SK-N-SH (cell line): ENCODE measurements at regions of chr13 and their contacts with region 1.

Region 1: DNA sequence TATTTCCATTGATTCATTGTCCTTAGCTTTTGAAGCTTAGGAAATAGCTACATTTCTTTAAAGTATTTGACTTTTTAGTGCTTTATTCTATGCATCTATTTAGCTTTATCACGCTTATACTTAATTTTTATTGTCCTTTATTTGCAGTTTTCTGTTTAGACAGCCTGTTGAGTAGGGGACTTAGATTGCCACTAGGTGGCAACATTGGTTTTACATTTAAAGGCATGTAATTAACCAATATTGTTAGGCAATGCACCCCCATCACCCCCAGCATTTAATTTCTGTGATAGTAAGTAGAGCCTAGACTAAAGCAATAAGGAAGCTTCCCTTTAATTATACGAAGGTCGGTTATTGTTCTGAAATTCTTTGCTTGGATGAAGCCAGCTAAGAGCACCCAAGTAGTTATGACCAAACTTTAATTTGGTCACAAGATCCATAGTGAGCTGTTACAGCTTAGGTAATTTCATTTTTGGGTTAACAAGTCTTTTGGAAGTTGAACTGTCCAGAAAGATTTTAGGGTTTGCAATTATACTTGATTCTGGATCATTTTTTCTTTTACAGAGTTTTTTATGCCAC is 36.5 kb downstream of the B3GLCT start:
- DNase-seq: peak; percentile 52
- H3K4me3 ChIP-seq: no peak overlapping the region
- H3K27ac ChIP-seq: no peak overlapping the region
- H3K4me1 ChIP-seq: no peaks in the 10 kb centered on the region; a peak in 1 of 4 replicates
- H3K27me3 ChIP-seq: no peaks in the 10 kb centered on the region
- CTCF ChIP-seq: peak; percentile 91
- EP300 ChIP-seq: no peak
- RAD21 ChIP-seq: peak; percentile 85

Region 2: GRCh38 chr13:31199849-31200636 is 36.3 kb before region 1 on chr13 and contains the start of gene B3GLCT:
- CTCF ChIA-PET with region 1: interaction called, 10 read pairs
- POLR2A ChIA-PET with region 1: no interaction called
- DNase-seq: peak; percentile 97
- H3K4me3 ChIP-seq: peak within 1 kb of the TSS; percentile 76 to 84
- H3K27ac ChIP-seq: peak within 1 kb of the TSS; percentile 82 to 93
- H3K4me1 ChIP-seq: peaks cover 11 to 14% of the 10 kb centered on the region in 2 experiments; a peak in 3 of 4 replicates
- H3K27me3 ChIP-seq: no peaks in the 10 kb centered on the region
- CTCF ChIP-seq: peak; percentile 63
- EP300 ChIP-seq: peak in 1 of 2 experiments; percentile 32; a peak in 1 of 4 replicates
- RAD21 ChIP-seq: peak; percentile 60
- polyA plus RNA-seq, gene B3GLCT: 2.4 and 2.8 TPM in 2 replicates

Region 3: GRCh38 chr13:31221057-31221456 is 15.2 kb before region 1 on chr13:
- CTCF ChIA-PET with region 1: interaction called, 40 read pairs
- POLR2A ChIA-PET with region 1: no interaction called
- DNase-seq: no peak
- H3K4me3 ChIP-seq: no peak overlapping the region
- H3K27ac ChIP-seq: no peak overlapping the region
- H3K4me1 ChIP-seq: peaks cover 0 to 3% of the 10 kb centered on the region in 2 experiments; a peak in 1 of 4 replicates
- H3K27me3 ChIP-seq: no peaks in the 10 kb centered on the region
- CTCF ChIP-seq: no peak
- EP300 ChIP-seq: no peak
- RAD21 ChIP-seq: no peak

Region 4: GRCh38 chr13:31409678-31410356 is 173.5 kb after region 1 on chr13:
- CTCF ChIA-PET with region 1: interaction called, 20 read pairs
- POLR2A ChIA-PET with region 1: no interaction called
- DNase-seq: no peak
- H3K4me3 ChIP-seq: no peak overlapping the region
- H3K27ac ChIP-seq: no peak overlapping the region
- H3K4me1 ChIP-seq: no peaks in the 10 kb centered on the region
- H3K27me3 ChIP-seq: peaks cover 5% of the 10 kb centered on the region; the same call in 1 of the 2 replicates
- CTCF ChIP-seq: peak; percentile 30
- EP300 ChIP-seq: no peak
- RAD21 ChIP-seq: no peak

Region 5: GRCh38 chr13:31431722-31432137 is 195.4 kb after region 1 on chr13:
- CTCF ChIA-PET with region 1: interaction called, 383 read pairs
- POLR2A ChIA-PET with region 1: no interaction called
- DNase-seq: peak; percentile 46
- H3K4me3 ChIP-seq: no peak overlapping the region
- H3K27ac ChIP-seq: no peak overlapping the region
- H3K4me1 ChIP-seq: peaks cover 0 to 6% of the 10 kb centered on the region in 2 experiments; a peak in 2 of 4 replicates
- H3K27me3 ChIP-seq: no peaks in the 10 kb centered on the region
- CTCF ChIP-seq: peak; percentile 71
- EP300 ChIP-seq: no peak
- RAD21 ChIP-seq: peak; percentile 75

Region 6: DNA sequence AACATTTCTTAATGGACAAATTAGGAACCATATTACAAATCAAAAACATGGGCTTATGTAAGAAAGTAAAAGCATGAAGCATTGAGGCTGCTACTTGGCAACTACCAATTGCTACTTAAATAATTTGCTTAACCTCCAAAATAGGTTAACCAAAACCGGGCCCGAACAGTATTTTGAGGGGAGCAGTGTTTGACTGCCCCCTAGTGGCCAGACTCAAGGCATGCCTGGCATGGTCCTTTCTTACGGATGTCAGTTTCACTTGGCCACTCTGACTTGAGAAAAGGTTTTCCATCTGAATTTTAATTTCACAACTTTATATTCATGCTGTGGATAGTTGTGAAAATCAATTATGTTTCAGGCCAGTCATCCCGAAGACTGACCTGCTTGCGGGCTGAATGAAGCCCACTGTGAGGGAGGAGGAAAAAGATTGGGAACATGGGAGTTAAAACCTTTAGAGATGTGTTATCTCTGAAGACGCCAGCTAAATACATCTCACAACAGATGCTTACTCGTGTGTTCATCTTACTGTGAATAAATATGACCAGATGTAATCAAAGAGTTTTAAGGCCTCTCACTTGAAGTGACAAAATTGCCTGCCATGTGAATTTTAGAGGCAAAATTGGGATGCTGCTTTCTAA is 505.9 kb after region 1 on chr13:
- CTCF ChIA-PET with region 1: interaction called, 42 read pairs
- POLR2A ChIA-PET with region 1: no interaction called
- DNase-seq: peak; percentile 66
- H3K4me3 ChIP-seq: peak overlapping the region in 1 of 2 experiments; percentile 20; a peak in 1 of 4 replicates
- H3K27ac ChIP-seq: no peak overlapping the region
- H3K4me1 ChIP-seq: no peaks in the 10 kb centered on the region; a peak in 1 of 4 replicates
- H3K27me3 ChIP-seq: no peaks in the 10 kb centered on the region
- CTCF ChIP-seq: peak; percentile 98
- EP300 ChIP-seq: no peak
- RAD21 ChIP-seq: peak; percentile 99